ENCODE measurements at regions of chr1 and their contacts with region 1.

Region 1: DNA sequence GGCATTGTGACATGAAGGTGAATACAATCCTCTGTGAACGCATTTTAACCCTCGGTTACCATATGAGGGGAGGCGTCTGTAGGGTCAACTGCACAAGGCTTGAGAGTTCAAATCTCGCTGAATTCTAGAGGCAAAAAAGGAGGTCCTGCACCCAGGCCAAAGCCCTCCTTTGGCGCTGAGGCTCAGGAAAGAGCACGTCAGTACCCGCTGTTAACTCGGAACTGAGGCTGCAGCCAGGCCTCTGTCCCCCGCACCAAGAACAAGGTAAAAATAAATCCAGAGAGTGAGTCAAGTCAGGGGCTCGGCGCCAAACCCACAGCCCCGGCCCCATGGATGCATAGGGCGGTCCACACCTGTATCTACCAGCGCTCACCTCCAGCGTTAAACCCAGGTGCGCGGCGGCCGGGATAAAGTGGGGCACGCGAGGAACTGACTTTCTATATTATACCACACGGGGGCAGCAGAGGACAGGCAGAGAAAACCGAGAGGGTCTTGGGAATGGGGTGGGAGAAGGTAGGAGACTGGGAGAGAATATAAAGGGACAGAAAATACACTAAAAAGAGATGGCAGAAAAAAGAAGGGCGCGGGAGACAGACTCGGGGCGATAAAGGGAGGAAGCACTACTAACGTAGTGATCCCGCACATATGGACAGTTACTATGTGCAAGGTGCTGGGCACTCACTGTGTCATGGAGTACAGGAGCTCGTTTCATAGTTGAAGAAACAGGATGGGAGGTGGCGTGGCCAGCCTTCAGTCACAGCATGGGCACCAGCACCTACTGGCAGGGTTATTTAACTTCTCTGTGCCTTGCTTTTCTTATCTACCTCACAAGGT is 54.8 kb downstream of the DMRTA2 start:
- DNase-seq: peak; percentile 63 to 78 (median 73)
- ATAC-seq: peak; percentile 90
- H3K4me3 ChIP-seq: no peak overlapping the region
- H3K27ac ChIP-seq: no peak overlapping the region
- H3K4me1 ChIP-seq: peaks cover 0 to 3% of the 10 kb centered on the region in 2 experiments; a peak in 1 of 5 replicates
- H3K27me3 ChIP-seq: peaks cover 2 to 4% of the 10 kb centered on the region in 2 experiments; a peak in 3 of 5 replicates
- CTCF ChIP-seq: peak; percentile 81 to 84 (median 83)
- EP300 ChIP-seq: no peak
- POLR2A ChIP-seq: no peak
- RAD21 ChIP-seq: peak; percentile 75 to 89

Region 2: DNA sequence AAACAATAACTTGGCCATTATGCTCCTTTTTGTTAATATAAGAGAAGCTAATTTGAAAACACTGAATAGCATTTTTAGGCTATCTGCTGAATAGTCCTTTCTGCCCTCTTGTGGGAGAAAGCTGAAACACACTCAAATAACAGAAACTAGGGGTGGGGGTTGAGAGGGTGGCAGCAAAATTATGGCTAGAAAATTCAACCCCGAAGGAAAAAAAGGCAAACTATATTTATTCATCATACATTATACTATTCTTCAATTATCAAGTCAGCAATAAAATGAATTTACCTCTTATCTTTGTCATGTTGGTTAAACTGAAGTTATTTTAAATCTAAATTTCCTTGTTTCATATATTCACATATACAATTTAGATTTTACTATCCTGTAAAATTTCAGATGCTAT is 335.7 kb after region 1 on chr1:
- CTCF ChIA-PET with region 1: interaction called, 3 read pairs
- POLR2A ChIA-PET with region 1: no interaction called
- in situ Hi-C with region 1: no loop called
- intact Hi-C with region 1: loop called (anchors 1 kb)
- DNase-seq: peak; percentile 68 to 70 (median 70)
- ATAC-seq: peak; percentile 89
- H3K4me3 ChIP-seq: no peak overlapping the region
- H3K27ac ChIP-seq: no peak overlapping the region
- H3K4me1 ChIP-seq: no peaks in the 10 kb centered on the region
- H3K27me3 ChIP-seq: no peaks in the 10 kb centered on the region
- CTCF ChIP-seq: peak; percentile 62 to 75 (median 68); a peak in 5 of 6 replicates
- EP300 ChIP-seq: no peak
- POLR2A ChIP-seq: no peak
- RAD21 ChIP-seq: peak; percentile 22 to 58; a peak in 1 of 4 replicates

Region 3: DNA sequence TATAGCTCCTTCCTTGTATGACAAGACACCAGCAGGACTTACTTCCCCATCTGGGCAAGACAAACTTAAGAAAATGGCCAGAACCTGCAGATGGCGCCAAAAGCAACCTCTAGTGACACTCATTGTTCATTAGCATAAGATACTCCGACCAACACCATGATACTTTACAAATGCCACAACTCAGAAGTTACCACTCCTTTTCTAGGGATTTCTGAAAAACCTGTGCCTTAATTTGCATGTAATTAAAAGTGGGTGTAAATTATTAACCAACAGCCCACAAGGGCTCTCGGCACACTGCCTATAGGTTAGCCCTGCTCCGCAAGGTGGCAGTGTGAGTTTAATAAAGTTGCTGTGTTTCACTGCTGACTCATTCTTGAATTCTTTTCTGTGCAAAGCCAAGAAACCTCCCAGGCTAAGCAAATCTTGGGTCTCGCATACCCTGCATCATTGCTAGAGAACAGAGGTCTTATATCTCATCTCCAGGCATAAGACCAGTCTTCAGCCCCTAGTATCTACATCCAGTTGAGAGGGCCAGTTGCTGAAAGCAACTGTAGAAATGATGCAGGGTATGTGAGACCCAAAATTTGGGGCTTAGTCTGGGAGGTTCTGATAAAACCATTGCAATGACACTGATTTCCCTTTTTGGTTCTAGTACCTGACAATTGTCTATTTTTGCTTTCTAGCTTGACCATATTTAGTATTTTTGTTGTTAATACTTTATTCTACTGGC is 505.2 kb after region 1 on chr1:
- CTCF ChIA-PET with region 1: no interaction called
- POLR2A ChIA-PET with region 1: no interaction called
- in situ Hi-C with region 1: no loop called
- intact Hi-C with region 1: loop called (anchors 2 kb)
- DNase-seq: peak; percentile 51 to 91 (median 62)
- ATAC-seq: peak; percentile 96
- H3K4me3 ChIP-seq: peak overlapping the region; percentile 37
- H3K27ac ChIP-seq: peak overlapping the region; percentile 67
- H3K4me1 ChIP-seq: peaks cover 0 to 3% of the 10 kb centered on the region in 2 experiments; a peak in 2 of 5 replicates
- H3K27me3 ChIP-seq: no peaks in the 10 kb centered on the region
- CTCF ChIP-seq: peak; percentile 93 to 98 (median 97)
- EP300 ChIP-seq: peak; percentile 45; the same call in 1 of the 2 replicates
- POLR2A ChIP-seq: no peak
- RAD21 ChIP-seq: peak; percentile 87 to 88

Region 4: GRCh38 chr1:51192213-51192843 is 823.9 kb after region 1 on chr1:
- CTCF ChIA-PET with region 1: interaction called, 8 read pairs
- POLR2A ChIA-PET with region 1: no interaction called
- in situ Hi-C with region 1: loop called (anchors 10 kb)
- intact Hi-C with region 1: loop called (anchors 1 kb)
- DNase-seq: peak; percentile 65 to 86 (median 70)
- ATAC-seq: peak; percentile 90
- H3K4me3 ChIP-seq: no peak overlapping the region
- H3K27ac ChIP-seq: no peak overlapping the region
- H3K4me1 ChIP-seq: peaks cover 0 to 3% of the 10 kb centered on the region in 2 experiments; a peak in 1 of 5 replicates
- H3K27me3 ChIP-seq: no peaks in the 10 kb centered on the region
- CTCF ChIP-seq: peak; percentile 79 to 91 (median 81)
- EP300 ChIP-seq: no peak
- POLR2A ChIP-seq: no peak
- RAD21 ChIP-seq: peak; percentile 72 to 82

Measured in K562 (cell line).